HepG2 (cell line): ENCODE measurements at regions of chr4 and their contacts with region 1.

Region 1: DNA sequence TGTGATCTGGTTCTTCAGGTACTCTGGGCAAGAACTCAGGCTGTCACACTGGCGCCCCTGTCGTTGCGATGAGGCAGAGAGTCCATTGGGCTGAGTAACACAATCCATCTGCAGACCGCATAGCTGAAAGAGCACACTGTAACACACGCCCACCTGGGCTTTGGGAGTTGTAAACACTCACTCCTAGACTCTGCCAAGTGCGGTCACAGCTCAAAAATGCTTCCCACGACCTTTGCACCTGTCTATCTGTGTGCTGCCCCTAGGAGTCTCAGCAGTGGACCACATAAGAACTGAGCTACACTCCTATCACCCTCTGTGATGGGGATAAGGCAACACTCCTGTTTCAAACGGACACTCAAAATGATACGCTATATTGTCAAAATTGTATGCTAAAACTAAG is 2028.3 kb downstream of the PCDH7 start:
- DNase-seq: peak; percentile 79
- ATAC-seq: peak; percentile 98
- H3K4me3 ChIP-seq: no peak overlapping the region
- H3K27ac ChIP-seq: no peak overlapping the region
- H3K4me1 ChIP-seq: peaks cover 9% of the 10 kb centered on the region
- H3K27me3 ChIP-seq: no peaks in the 10 kb centered on the region; a peak in 1 of 5 replicates
- CTCF ChIP-seq: peak; percentile 36
- EP300 ChIP-seq: no peak
- POLR2A ChIP-seq: no peak
- RAD21 ChIP-seq: no peak

Region 2: DNA sequence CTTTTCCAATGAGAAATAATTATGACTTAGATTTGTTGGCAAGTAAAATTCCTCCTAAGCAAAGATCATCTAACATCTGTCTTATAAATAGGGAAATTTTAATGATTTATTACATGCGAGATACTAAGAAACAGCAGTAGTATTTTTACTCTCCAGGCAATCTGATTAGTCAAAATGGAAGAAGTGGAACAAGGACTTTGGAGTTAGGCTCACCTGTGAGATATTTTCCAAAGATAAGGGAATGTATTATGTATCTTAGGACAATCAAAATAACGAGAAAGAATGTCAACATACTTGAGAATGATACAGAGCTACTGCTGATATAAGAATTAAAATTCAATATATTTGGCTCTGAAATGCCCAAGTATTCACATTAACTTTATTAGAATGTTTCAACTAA is 46.4 kb before region 1 on chr4:
- CTCF ChIA-PET with region 1: no interaction called
- POLR2A ChIA-PET with region 1: no interaction called
- in situ Hi-C with region 1: no loop called
- intact Hi-C with region 1: loop called (anchors 5 kb)
- DNase-seq: no peak
- ATAC-seq: no peak
- H3K4me3 ChIP-seq: no peak overlapping the region
- H3K27ac ChIP-seq: no peak overlapping the region
- H3K4me1 ChIP-seq: peaks cover 13% of the 10 kb centered on the region
- H3K27me3 ChIP-seq: no peaks in the 10 kb centered on the region
- CTCF ChIP-seq: no peak
- EP300 ChIP-seq: no peak
- POLR2A ChIP-seq: no peak
- RAD21 ChIP-seq: no peak